Posterior vena cava (tissue), 2 donors: ENCODE measurements at regions of chr9 and their contacts with region 1.

Region 1: GRCh38 chr9:97398999-97399758 is 12.7 kb upstream of the TDRD7 start:
- DNase-seq: peak; percentile 90

Region 2: GRCh38 chr9:96854073-96854876 is 544.9 kb before region 1 on chr9 and contains the start of gene ZNF782:
- intact Hi-C with region 1: loop called in 1 of 2 experiments (anchors 10 kb)
- DNase-seq: peak; percentile 97
- total RNA-seq, gene ZNF782: 5.8 to 6.4 TPM

Region 3: DNA sequence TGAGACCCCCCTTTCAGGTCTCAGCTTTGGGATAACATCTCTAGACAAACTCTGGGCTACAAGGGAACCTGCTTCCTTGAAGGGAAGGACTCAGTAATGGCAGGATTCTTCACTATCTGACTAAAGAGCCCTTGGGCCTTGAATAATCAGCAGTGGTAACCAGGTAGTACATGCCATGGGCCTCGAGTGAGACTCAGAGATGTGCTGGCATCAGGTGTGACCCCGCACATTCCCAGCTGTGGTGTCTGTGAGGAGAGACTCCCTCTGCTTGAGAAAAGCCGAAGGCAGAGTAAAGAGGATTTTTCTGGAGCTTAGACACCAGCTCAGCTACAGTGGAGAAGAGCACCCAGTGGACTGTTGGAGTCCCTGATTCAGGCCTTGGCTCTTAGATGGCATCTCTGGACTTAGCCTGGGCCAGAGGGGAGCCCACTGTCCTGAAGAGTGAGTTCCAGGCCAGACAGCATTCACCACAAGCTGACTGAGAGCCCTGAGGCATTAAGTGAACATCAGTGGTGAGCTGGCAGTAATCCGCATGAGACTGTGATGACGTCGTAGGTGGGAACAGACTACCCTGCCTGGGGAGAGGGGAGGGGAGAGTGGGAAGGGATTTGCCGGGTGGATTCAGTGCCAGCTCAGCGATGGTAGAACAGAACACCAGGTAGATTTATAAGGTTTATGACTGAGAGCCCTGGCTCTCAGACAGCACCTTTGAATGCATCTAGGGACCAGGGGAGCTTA is 539.5 kb before region 1 on chr9:
- intact Hi-C with region 1: loop called (anchors 5 to 10 kb)
- DNase-seq: no peak